PC-9 (cell line): ENCODE measurements at regions of chr9 and their contacts with region 1.

Region 1: DNA sequence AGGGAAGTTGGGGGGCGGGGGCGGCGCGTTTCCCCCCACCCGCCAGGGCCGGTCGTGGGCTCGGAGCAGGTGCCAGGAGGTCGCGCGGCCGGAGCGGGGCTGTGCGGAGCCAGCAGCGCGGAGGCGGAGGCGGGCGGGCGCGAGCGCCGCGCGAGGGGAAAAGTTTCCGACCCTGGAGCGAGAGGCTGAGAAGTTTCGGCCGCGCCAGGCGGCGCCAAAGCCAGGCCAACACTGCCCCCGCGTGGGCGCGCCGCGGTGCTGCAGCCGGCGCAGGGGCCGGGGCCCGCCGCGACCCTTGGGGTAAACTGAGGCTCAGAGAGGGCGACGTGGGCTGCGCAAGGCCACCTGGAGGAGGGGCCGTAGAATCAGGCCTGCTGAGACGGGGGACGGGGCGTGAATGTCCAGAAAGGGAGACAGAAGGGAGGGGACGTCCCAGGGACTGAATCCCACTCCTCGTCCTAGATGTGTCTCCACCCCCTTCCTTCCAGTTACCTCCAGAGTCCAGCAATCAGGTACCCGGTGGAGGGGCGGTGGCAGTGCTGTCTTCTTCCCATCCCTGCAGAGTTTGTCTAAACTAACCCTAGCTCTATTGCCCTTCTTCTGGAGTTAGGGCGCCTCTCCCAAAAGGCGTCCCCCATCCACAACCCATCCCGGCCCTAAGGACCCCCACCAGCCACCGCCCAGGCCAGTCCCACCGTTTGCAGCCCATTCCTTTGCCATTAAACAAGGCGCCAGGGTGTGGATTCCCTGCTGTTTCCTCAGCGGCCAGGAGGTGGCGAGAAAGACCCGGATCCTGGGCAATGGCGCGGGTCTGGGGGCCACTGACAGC is 10.2 kb downstream of the C9orf50 start:
- DNase-seq: peak in 1 of 2 experiments; percentile 77
- H3K4me3 ChIP-seq: peak overlapping the region; percentile 93
- H3K27ac ChIP-seq: peak overlapping the region; percentile 62
- H3K4me1 ChIP-seq: peaks cover 32% of the 10 kb centered on the region
- H3K27me3 ChIP-seq: no peaks in the 10 kb centered on the region
- CTCF ChIP-seq: peak; percentile 85

Region 2: DNA sequence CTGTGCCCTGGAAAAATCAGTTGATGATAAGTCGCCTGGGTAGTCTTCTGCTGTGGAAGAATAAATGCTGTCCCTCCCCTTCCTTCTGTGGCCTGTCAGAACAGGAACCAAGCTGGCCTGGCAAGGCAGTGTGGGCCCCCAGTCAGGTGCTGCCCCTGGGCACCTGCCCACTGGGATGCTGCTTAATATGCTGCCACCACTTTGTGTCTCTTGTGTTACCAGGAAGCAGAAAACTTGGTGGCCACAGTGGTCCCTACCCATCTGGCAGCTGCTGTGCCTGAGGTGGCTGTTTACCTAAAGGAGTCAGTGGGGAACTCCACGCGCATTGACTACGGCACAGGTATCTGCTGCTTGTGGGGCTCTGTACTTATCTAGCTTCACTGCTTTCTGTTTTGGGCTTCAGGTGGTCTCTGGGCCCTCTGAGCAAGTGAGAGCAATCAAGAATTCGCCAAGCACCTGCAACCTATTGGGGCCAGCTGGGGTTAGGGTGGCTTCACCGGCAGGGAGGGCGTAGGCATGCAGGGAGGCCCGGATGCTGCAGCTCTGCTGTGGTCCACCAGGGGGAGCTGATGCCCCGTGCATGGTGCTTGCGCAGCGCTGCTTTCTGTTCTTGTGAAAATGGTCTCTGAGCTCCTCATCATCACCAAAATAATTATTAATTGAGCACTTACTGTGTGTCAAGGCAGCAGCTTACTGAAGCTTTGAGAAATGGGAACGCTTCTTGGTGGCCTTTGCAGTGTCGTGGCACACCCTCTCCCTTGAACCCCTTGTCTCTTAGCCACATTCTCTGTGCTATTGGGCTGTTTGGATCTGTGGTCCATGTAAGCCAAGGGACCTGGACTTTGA is 479.2 kb before region 1 on chr9:
- CTCF ChIA-PET with region 1: interaction called, 3 read pairs
- POLR2A ChIA-PET with region 1: no interaction called
- intact Hi-C with region 1: loop called (anchors 2 kb)
- DNase-seq: peak in 1 of 2 experiments; percentile 81
- H3K4me3 ChIP-seq: no peak overlapping the region
- H3K27ac ChIP-seq: no peak overlapping the region
- H3K4me1 ChIP-seq: no peaks in the 10 kb centered on the region
- H3K27me3 ChIP-seq: no peaks in the 10 kb centered on the region
- CTCF ChIP-seq: peak; percentile 97

Region 3: DNA sequence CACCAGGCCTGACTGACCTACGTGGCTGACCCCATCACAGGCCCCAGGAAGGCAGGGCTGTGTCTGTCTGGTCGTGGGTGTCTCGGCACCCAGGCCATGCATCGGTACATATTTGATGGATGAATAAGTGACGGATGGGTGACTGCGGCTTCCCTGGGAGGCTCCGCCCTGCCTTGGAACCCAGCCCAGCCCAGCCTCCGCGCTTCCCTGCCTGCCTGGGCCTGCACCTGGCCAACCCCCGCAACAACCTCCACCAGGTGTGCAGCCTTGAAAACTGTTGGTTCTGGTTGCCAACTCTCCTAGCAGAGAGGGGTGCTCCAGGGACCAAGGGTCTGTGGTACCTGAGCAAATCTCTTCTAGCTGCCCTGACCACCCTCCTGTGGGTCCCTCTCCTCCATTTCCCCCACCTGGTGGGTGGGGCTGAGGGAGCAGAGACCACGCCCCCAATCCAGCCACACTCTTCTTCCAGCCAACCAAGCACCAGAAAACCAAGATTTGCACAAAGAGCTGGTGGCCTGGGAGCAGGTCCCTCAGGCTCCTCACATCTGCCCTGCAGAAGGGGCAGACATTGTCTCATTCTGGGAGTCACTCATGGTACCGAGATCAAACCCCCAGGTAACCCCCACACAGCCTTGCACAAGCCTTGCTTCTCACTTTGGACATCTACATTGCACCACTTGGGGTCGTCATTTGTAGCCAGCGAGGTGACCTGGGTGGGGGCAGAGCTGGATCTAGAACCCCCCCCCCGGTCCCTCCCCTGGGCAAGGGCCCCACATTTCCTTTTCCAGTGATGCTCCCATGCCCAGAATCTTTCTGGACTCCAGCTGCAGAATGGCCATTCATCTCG is 332.1 kb before region 1 on chr9:
- CTCF ChIA-PET with region 1: no interaction called
- POLR2A ChIA-PET with region 1: no interaction called
- intact Hi-C with region 1: loop called (anchors 1 kb)
- DNase-seq: peak; percentile 86 to 97
- H3K4me3 ChIP-seq: peak overlapping the region; percentile 58; the same call in 1 of the 2 replicates
- H3K27ac ChIP-seq: peak overlapping the region; percentile 79
- H3K4me1 ChIP-seq: peaks cover 51% of the 10 kb centered on the region
- H3K27me3 ChIP-seq: no peaks in the 10 kb centered on the region
- CTCF ChIP-seq: no peak

Region 4: DNA sequence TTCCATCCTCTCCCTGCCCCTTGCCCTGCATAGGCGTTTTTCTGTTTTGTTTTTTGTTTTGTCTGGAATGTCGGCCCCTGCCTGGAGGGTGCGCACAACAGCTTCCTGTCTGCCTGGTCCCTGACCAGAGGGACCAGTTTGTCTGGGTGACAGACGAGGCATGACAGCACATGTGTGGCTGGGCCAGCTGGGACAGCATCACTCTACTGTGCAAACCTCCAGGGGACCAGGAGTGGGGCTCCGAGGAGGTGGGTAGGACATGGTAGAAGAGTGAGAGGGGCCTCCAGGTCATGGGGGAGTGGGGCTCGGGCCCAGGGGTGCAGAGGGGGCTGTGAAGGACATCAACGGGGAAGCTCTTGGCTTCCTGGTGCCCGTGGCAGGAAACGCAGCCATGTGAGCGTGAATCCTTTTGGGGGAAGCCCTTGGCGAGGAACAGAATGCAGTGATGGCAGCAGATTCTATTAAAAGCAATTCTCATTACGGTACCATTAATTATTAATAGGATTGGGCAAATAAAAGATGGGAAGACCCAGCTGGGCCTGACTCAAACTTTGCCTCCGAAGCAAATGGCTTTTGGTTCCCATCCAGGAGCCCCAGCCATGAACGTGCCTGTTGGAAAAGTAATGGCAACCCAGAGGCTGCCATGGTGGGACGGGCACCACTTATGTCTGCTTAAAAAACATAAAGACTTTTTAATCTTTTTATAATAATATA is 248.2 kb before region 1 on chr9:
- CTCF ChIA-PET with region 1: no interaction called
- POLR2A ChIA-PET with region 1: no interaction called
- intact Hi-C with region 1: loop called (anchors 5 kb)
- DNase-seq: peak; percentile 77 to 80
- H3K4me3 ChIP-seq: no peak overlapping the region
- H3K27ac ChIP-seq: no peak overlapping the region
- H3K4me1 ChIP-seq: peaks cover 25% of the 10 kb centered on the region
- H3K27me3 ChIP-seq: no peaks in the 10 kb centered on the region
- CTCF ChIP-seq: peak; percentile 50

Region 5: DNA sequence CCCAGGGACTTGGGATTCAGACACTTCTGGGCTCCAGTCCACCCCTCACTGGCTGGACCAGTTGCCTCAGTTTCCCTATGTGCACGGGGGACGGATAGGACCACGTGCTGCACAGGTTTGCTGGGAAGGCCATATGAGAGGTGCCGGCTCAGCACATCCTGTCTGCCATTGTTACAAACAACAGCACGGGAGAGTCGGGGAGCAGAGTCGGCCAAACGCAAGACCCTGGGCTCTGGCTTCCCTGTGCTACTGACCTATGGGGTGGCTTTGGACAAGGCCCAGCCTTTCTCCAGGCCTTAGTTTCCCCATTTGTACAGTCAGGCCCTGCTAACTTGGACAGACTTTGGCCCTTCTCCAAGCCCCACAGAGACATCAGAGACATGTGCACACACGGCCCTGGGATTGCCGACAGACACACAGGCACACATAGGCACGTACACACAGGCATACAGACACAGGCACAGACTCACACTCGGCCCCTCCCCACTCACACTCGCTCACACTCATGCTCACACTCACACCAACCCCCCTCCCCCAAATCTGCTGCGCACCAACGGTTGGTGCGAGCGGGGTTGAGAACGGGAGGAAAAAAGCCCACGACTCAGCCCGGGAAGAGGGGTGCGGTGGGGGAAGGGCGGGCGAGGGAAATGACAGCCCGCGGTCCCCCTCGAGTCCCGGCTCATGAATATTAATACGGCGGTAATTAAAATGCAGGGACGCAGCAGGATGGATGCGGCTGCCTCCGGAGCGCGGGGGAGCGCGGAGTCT is 122.9 kb before region 1 on chr9:
- CTCF ChIA-PET with region 1: no interaction called
- POLR2A ChIA-PET with region 1: interaction called, 3 read pairs
- intact Hi-C with region 1: loop called (anchors 2 kb)
- DNase-seq: no peak
- H3K4me3 ChIP-seq: peak overlapping the region; percentile 66
- H3K27ac ChIP-seq: peak overlapping the region; percentile 91
- H3K4me1 ChIP-seq: peaks cover 72% of the 10 kb centered on the region
- H3K27me3 ChIP-seq: no peaks in the 10 kb centered on the region
- CTCF ChIP-seq: no peak

Region 6: GRCh38 chr9:129569502-129570449 is 40.9 kb before region 1 on chr9:
- CTCF ChIA-PET with region 1: interaction called, 11 read pairs
- POLR2A ChIA-PET with region 1: no interaction called
- intact Hi-C with region 1: loop called (anchors 1 kb)
- DNase-seq: peak; percentile 52 to 56
- H3K4me3 ChIP-seq: peak overlapping the region; percentile 1; the same call in 1 of the 2 replicates
- H3K27ac ChIP-seq: peak overlapping the region; percentile 90
- H3K4me1 ChIP-seq: peaks cover 36% of the 10 kb centered on the region
- H3K27me3 ChIP-seq: no peaks in the 10 kb centered on the region
- CTCF ChIP-seq: peak; percentile 67